ENCODE measurements at regions of chr1 and their contacts with region 1.

Region 1: DNA sequence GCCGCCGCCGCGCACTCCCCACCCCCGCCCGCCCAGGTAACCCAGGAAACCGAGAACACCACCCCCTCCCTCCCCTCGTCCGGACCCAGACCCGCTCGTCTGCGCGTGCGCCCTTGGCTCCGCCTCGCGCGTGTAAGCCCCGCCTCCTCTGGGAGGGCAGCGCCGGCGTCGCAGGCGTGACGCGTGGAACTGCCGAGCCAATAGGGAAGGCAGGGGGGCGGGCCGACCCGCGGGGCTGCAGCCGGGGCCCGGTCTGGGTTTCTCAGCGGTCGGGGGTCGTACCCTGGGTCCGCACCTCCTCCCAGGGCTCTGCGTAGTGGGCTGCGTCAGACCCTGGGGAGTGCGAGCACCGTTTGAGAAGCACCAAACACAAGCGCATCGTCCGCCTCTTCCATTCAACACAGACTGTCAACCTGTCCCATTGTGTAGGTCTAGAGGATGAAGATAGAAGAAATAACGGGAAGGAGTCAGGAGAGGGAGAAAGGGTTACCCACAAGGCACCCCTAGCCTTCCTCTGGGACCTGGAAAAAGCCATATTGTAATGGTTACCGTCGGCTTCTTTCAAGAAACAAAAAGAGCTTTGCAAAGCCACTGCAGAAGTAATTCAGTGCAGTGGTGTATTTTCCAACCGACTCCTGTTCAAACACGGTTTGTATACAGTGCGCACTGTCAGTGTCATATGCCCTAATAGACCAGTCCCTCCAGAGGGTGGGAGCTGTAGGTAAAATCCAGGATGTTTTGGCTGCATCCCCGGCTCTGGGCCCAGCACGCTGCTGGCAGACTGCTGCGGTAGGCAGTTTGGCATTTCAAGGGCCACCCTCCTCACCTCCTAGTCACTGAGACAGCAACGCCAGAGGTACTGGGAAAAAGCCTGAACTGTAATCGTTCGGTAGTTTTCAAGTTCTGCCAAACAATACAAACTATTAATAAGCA is 473 bp upstream of the LYST start:
- DNase-seq: peak; percentile 98
- ATAC-seq: peak; percentile 74
- H3K4me3 ChIP-seq: peak overlapping the region; percentile 62 to 97 (median 93)
- H3K4me3 Mint-ChIP-seq: peak overlapping the region; percentile 91
- H3K27ac ChIP-seq: peak overlapping the region; percentile 94 to 99
- H3K27ac Mint-ChIP-seq: peak overlapping the region; percentile 94
- H3K4me1 ChIP-seq: peaks cover 38 to 42% of the 10 kb centered on the region in 2 donors
- H3K4me1 Mint-ChIP-seq: peaks cover 50% of the 10 kb centered on the region
- H3K27me3 ChIP-seq: no peaks in the 10 kb centered on the region
- H3K27me3 Mint-ChIP-seq: no peaks in the 10 kb centered on the region
- CTCF ChIP-seq: no peak

Region 2: DNA sequence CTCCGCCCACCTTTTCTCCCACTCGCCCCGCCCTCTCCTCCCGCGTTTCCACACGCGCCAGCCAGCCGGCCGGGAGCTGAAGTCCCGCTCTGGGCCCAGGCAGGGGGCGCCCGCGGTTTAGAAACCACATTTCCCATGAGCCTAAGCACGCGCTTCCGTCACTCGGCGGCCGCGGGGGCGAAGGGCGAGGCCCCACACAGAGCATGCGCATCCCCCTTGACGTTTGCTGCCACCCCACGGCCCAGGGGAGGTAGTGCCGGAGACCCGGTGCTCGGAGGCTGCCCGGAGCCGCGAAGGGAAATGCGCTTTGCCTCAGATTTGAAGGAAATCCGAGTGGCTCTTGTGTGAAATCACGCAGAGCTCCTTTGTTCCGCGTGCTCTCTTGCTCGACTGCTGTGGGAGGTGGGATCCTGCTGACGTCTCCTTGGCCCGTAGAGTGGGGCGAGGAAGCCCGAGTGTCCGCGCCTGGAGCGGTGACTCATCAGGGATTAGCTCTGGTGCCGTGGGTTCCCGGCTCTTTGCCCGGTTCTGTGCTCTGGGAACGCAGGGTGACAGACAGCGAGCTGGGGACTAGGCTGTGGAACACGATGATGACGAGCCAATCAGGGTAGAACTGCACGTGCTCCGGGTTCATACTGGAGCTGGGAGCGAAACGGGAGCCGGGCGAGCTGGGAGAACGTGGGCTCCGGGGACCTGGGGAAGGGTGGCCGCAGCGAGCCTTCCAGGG is 362.5 kb before region 1 on chr1:
- CTCF ChIA-PET with region 1: no interaction called
- POLR2A ChIA-PET with region 1: no interaction called
- intact Hi-C with region 1: loop called (anchors 1 kb)
- DNase-seq: peak; percentile 99
- ATAC-seq: peak; percentile 83
- H3K4me3 ChIP-seq: peak overlapping the region; percentile 41 to 97 (median 93)
- H3K4me3 Mint-ChIP-seq: peak overlapping the region; percentile 99
- H3K27ac ChIP-seq: peak overlapping the region; percentile 85 to 92
- H3K27ac Mint-ChIP-seq: peak overlapping the region; percentile 90
- H3K4me1 ChIP-seq: peaks cover 7 to 12% of the 10 kb centered on the region in 2 donors
- H3K4me1 Mint-ChIP-seq: peaks cover 24% of the 10 kb centered on the region
- H3K27me3 ChIP-seq: no peaks in the 10 kb centered on the region
- H3K27me3 Mint-ChIP-seq: peaks cover 3% of the 10 kb centered on the region
- CTCF ChIP-seq: peak; percentile 90

Region 3: DNA sequence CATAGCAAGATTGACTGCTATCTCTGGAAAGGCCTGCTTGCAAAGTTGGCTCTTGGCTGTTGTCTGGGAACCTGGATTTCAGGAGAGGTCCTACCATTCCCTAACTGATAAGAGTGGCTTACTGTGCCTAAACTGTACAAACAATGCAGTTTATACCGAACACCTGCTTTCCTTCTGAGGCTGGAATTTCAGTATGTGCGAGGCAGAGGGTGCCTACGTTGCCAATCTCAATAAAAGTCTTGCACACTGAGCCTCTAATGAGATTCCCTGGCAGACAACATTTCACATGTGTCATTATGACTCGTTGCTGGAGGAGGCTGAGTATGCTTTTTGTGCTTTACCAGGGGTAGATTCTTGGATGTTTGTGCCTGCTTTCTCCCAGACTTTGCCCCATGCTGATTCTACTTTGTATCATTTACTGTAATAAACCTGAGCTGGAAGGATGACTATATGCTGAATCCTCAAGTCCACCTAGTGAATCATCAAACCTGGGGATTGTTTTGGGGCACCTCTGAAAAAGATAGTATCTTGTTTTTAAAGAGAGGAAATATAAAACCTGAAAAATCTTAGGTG is 158.7 kb before region 1 on chr1:
- CTCF ChIA-PET with region 1: no interaction called
- POLR2A ChIA-PET with region 1: no interaction called
- intact Hi-C with region 1: no loop called
- DNase-seq: no peak
- ATAC-seq: no peak
- H3K4me3 ChIP-seq: no peak overlapping the region
- H3K4me3 Mint-ChIP-seq: no peak overlapping the region
- H3K27ac ChIP-seq: no peak overlapping the region
- H3K27ac Mint-ChIP-seq: no peak overlapping the region
- H3K4me1 ChIP-seq: no peaks in the 10 kb centered on the region
- H3K4me1 Mint-ChIP-seq: no peaks in the 10 kb centered on the region
- H3K27me3 ChIP-seq: no peaks in the 10 kb centered on the region
- H3K27me3 Mint-ChIP-seq: no peaks in the 10 kb centered on the region
- CTCF ChIP-seq: no peak

Region 4: DNA sequence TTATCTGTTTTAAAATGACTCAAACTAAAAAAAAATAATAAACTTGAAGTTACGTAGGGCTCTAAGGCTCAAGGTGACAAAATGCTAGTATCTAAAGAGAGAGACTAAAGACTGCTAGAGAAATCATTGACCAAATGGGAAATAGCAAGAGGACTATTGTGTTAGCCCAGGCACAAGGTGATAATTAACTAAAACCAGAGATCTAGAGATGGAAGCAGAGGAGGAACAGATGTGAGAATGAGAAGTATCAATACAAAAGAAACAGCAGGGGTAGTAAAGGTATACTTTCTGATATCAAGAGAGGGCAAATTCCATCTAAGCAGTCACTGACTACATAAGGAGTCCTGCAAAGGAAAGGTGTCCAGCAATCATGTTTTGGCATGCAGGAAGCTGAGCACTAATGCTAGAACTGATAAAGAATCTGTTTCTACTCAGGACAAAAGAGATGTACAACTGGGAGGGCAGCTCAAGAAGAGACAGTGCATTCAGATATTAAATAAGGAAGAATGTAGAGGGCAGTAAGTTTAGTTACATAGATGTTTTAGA is 117.4 kb before region 1 on chr1:
- CTCF ChIA-PET with region 1: no interaction called
- POLR2A ChIA-PET with region 1: no interaction called
- intact Hi-C with region 1: no loop called
- DNase-seq: no peak
- ATAC-seq: no peak
- H3K4me3 ChIP-seq: no peak overlapping the region
- H3K4me3 Mint-ChIP-seq: no peak overlapping the region
- H3K27ac ChIP-seq: no peak overlapping the region
- H3K27ac Mint-ChIP-seq: no peak overlapping the region
- H3K4me1 ChIP-seq: no peaks in the 10 kb centered on the region
- H3K4me1 Mint-ChIP-seq: no peaks in the 10 kb centered on the region
- H3K27me3 ChIP-seq: no peaks in the 10 kb centered on the region
- H3K27me3 Mint-ChIP-seq: no peaks in the 10 kb centered on the region
- CTCF ChIP-seq: no peak

Region 5: DNA sequence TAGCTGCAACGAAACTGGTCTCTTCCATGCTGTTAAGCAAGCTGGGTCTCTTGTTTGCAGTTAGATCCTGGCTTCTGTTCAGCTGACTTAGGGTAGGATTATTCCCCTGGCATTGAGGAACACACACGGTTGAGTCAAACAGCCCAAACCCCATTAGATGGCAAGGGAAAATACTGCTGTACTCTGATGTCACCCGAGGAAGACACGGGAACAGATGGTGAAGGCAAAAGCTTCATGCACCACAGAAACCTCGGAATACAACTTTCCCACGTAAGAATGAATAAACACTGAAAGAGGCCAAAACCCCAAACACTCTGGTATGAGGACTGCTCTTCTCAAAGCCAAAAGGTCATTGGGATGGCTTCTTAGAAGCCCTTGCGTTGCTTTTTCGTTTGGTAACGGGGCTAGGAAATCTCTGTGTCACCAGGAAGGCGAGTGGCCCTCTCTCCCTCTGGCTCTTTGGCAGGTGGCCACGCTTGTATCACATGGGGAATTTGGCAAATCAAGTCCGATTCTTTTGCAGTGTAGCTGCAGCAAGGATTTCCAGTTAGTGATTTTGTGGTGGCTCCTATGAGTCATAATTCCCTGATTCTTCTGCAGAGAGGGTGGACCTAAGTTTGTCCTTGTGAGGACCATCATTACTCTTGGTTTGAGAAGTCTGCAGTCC is 16.2 kb after region 1 on chr1:
- CTCF ChIA-PET with region 1: no interaction called
- POLR2A ChIA-PET with region 1: interaction called, 4 read pairs
- intact Hi-C with region 1: loop called (anchors 1 kb)
- DNase-seq: no peak
- ATAC-seq: no peak
- H3K4me3 ChIP-seq: no peak overlapping the region
- H3K4me3 Mint-ChIP-seq: no peak overlapping the region
- H3K27ac ChIP-seq: no peak overlapping the region
- H3K27ac Mint-ChIP-seq: peak overlapping the region; percentile 22
- H3K4me1 ChIP-seq: peaks cover 29 to 43% of the 10 kb centered on the region in 2 donors
- H3K4me1 Mint-ChIP-seq: peaks cover 58% of the 10 kb centered on the region
- H3K27me3 ChIP-seq: no peaks in the 10 kb centered on the region
- H3K27me3 Mint-ChIP-seq: no peaks in the 10 kb centered on the region
- CTCF ChIP-seq: no peak

Region 6: GRCh38 chr1:235954306-235955283 is 87.4 kb after region 1 on chr1:
- CTCF ChIA-PET with region 1: interaction called, 9 read pairs
- POLR2A ChIA-PET with region 1: interaction called, 6 read pairs
- intact Hi-C with region 1: loop called (anchors 1 kb)
- DNase-seq: peak; percentile 95
- ATAC-seq: peak; percentile 88
- H3K4me3 ChIP-seq: peak overlapping the region in 3 of 5 experiments; percentile 18 to 37 (median 32)
- H3K4me3 Mint-ChIP-seq: peak overlapping the region; percentile 72
- H3K27ac ChIP-seq: peak overlapping the region; percentile 70 to 78
- H3K27ac Mint-ChIP-seq: peak overlapping the region; percentile 82
- H3K4me1 ChIP-seq: peaks cover 57 to 61% of the 10 kb centered on the region in 2 donors
- H3K4me1 Mint-ChIP-seq: peaks cover 71% of the 10 kb centered on the region
- H3K27me3 ChIP-seq: no peaks in the 10 kb centered on the region
- H3K27me3 Mint-ChIP-seq: no peaks in the 10 kb centered on the region
- CTCF ChIP-seq: no peak

Region 7: DNA sequence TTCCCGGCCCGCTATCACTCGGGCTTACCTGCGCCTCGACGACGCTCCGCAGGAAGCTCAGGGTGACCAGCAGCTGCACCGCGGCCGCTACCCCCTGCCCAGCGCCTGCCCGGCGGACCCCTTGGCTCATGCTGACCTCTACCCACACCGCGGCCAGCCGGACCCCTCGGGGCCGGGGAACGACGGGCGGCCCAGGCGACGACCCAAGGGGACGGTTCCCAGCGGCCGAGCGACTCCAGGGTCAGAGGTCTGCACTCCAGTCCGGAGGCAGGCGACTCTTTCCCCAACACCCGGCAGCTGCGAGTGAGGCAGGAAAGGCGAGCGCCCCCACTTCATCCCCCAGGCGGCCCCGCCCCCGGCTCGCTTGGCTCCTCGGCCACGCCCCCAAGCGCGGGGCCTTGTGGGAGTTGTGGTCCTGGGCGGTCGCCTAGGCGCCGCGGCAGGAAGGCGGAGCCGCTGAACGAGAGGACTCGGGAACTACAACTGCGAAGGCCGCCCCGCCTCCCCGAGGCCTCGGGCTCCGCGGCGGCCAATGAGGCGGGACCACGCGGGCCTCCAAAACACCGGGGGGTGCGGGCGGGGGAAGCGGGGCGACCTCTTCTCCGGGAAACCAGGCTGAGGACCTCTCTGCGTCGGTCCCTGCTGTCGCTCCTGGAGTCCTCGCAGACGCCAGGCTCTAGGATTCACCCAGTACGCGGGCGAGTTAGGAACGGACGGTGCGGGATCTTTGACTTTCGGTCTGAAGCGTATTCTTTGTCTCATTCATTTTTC is 414.7 kb after region 1 on chr1 and contains the start of gene ERO1B:
- CTCF ChIA-PET with region 1: no interaction called
- POLR2A ChIA-PET with region 1: no interaction called
- intact Hi-C with region 1: loop called (anchors 5 kb)
- DNase-seq: peak; percentile 97
- ATAC-seq: peak; percentile 94
- H3K4me3 ChIP-seq: peak within 1 kb of the TSS; percentile 73 to 99 (median 94)
- H3K4me3 Mint-ChIP-seq: peak within 1 kb of the TSS; percentile 98
- H3K27ac ChIP-seq: peak within 1 kb of the TSS; percentile 64 to 89
- H3K27ac Mint-ChIP-seq: peak within 1 kb of the TSS; percentile 79
- H3K4me1 ChIP-seq: peaks cover 35% of the 10 kb centered on the region in 2 donors
- H3K4me1 Mint-ChIP-seq: peaks cover 54% of the 10 kb centered on the region
- H3K27me3 ChIP-seq: no peaks in the 10 kb centered on the region
- H3K27me3 Mint-ChIP-seq: no peaks in the 10 kb centered on the region
- CTCF ChIP-seq: no peak
- total RNA-seq, gene ERO1B: 24.3 and 25.6 TPM in 2 replicates

Region 8: DNA sequence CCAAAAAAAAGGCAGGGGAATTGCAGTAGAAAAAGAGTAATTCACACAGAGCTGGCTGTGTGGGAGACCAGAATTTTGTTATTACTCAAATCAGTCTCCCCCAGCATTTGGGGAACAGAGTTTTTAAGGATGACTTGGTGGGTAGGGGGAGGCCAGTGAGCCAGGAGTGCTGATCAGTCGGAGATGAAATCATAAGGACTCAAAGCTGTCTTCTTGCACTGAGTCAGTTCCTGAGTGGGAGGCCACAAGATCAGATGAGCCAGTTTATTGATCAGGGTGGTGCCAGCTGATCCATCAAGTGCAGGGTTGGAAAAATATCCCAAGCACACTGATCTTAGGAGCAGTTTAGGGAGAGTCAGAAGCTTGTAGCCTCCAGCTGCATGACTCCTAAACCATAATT is 503.2 kb after region 1 on chr1:
- CTCF ChIA-PET with region 1: no interaction called
- POLR2A ChIA-PET with region 1: no interaction called
- intact Hi-C with region 1: no loop called
- DNase-seq: no peak
- ATAC-seq: no peak
- H3K4me3 ChIP-seq: no peak overlapping the region
- H3K4me3 Mint-ChIP-seq: no peak overlapping the region
- H3K27ac ChIP-seq: no peak overlapping the region
- H3K27ac Mint-ChIP-seq: no peak overlapping the region
- H3K4me1 ChIP-seq: no peaks in the 10 kb centered on the region
- H3K4me1 Mint-ChIP-seq: no peaks in the 10 kb centered on the region
- H3K27me3 ChIP-seq: no peaks in the 10 kb centered on the region
- H3K27me3 Mint-ChIP-seq: peaks cover 19% of the 10 kb centered on the region
- CTCF ChIP-seq: no peak